ENCODE measurements at regions of chr13 and their contacts with region 1.

Region 1: DNA sequence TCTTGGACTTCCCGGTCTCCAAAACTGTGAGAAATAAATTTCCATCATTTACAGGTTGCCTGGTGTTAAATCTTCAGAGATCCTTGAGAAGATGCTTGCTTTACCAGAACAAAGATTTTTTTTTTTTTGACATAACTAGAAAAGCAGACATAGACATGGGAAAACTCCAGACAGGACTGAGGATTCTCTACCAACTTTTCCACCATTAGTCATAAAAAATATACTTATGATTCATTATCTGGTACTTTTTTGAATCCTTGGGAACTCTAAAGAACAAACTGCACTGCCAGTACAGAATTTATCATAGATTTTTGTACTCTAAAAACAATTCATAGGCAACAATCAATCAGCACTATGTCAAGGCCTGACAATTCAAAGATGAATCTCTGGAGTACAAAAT is 487.6 kb downstream of the EFNB2 start:
- DNase-seq: no peak
- ATAC-seq: no peak
- H3K4me3 ChIP-seq: no peak overlapping the region
- H3K27ac ChIP-seq: no peak overlapping the region
- H3K4me1 ChIP-seq: no peaks in the 10 kb centered on the region
- H3K27me3 ChIP-seq: no peaks in the 10 kb centered on the region
- CTCF ChIP-seq: no peak
- POLR2A ChIP-seq: no peak

Region 2: GRCh38 chr13:105863300-105863920 is 184.4 kb before region 1 on chr13:
- intact Hi-C with region 1: loop called in 1 of 10 experiments (anchors 10 kb)
- DNase-seq: no peak
- ATAC-seq: no peak
- H3K4me3 ChIP-seq: no peak overlapping the region
- H3K27ac ChIP-seq: no peak overlapping the region
- H3K4me1 ChIP-seq: no peaks in the 10 kb centered on the region
- H3K27me3 ChIP-seq: no peaks in the 10 kb centered on the region
- CTCF ChIP-seq: no peak
- POLR2A ChIP-seq: no peak

Region 3: DNA sequence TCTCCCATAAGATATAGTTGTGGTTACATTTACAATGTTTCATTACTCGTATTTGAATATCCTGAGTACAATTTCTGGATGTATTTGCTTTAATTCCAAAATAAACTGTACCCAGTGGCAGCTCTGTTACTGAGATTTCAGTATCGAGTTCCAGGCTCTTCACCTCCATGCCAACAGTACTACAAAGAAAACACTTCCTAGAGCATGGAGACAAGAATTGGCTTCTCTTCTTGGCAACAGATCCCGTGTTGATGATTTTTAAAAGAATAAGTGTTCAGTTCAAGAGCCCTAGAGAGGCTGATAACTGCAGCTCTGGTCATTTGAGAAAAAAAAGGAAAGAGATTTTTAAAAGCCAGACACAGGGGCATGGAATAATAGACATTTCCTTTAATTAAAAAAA is 184.8 kb after region 1 on chr13:
- intact Hi-C with region 1: no loop called
- DNase-seq: no peak
- ATAC-seq: peak; percentile 33 to 72 (median 62)
- H3K4me3 ChIP-seq: no peak overlapping the region
- H3K27ac ChIP-seq: no peak overlapping the region
- H3K4me1 ChIP-seq: peaks cover 0 to 6% (median 0%) of the 10 kb centered on the region in 12 donors
- H3K27me3 ChIP-seq: peaks cover 0 to 13% (median 0%) of the 10 kb centered on the region in 9 donors
- CTCF ChIP-seq: no peak
- POLR2A ChIP-seq: no peak